Activated CD8-positive, alpha-beta T cell treated with anti-CD3 and anti-CD28 coated beads for 36 hours (primary cell): ENCODE measurements at regions of chr20 and their contacts with region 1.

Region 1: DNA sequence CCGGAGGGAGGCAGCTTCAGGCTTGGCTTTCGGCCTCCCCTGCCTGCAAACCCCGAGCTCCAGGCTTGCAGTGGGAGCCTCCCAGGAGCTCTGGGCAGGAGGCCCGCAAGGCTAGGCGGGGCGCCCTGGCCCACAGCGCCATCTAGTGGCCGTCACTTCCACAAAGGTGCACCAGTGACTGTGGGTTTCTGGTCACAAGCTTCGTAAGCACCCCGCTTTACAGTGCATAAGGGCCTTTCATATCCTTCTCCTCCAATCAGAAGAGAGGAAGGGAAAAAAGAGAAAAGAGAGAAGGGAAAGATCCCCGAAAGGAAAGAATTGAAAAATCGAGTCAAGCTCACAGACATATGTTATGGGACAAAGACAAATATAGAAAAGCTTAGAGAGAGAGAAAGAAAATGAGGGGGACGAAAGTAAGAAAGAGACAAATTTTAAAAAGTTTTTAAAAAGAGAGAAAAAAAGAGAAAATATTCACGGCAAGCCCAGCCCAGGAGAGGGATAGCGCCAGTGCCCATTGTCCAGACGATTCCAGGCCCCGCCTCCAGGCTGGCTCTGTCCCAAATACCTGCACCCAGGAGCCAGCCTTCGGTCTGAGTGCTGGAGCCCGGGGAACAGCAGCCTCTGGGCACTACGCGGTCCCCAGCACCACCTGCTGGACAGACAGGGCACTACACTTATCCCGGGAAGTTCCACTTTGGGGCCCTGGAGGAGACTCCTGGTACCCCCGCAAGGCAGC is 207.1 kb downstream of the PREX1 start:
- DNase-seq: peak; percentile 84
- ATAC-seq: peak; percentile 91
- H3K4me3 Mint-ChIP-seq: peak overlapping the region; percentile 22
- H3K27ac Mint-ChIP-seq: no peak overlapping the region
- H3K4me1 Mint-ChIP-seq: peaks cover 6% of the 10 kb centered on the region
- H3K27me3 Mint-ChIP-seq: no peaks in the 10 kb centered on the region
- CTCF ChIP-seq: peak; percentile 90

Region 2: DNA sequence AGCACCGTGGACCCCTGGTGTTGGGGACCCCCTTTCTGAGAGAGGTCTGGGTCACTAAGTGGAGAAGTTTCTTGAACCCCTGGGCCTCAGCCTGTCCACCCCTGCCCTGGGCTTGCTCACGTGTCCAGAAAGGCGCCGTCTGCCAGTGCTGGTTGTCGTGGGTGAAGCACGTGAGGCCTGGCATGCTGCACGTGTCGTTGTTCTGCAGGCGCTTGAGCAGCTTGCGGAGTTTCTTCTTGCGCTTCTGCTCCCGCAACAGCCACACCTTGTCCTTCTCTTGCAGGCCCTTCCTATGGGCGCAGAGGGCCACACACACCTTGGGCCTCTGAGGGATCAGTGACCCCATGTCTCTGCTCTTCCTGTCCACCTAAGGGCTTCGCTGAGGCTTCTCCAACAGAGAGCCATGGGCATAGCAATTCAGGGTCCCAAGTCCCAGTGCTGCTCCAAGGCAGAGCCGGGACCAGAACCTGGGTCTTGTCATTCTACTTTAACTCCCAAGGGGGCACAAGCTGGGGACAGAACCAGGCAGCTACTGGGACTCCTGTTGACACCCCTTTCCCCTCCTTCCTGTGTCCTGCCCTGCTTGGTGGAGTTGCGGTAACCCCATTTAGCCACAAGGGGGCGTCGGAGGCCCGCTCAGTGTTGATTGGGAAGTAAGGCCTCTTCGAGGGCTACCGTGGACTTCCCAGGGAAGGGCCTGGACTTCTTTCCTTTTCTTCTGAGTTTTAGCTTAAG is 957.2 kb before region 1 on chr20:
- CTCF ChIA-PET with region 1: interaction called, 10 read pairs
- POLR2A ChIA-PET with region 1: no interaction called
- intact Hi-C with region 1: no loop called
- DNase-seq: peak; percentile 82
- ATAC-seq: peak; percentile 89
- H3K4me3 Mint-ChIP-seq: no peak overlapping the region
- H3K27ac Mint-ChIP-seq: no peak overlapping the region
- H3K4me1 Mint-ChIP-seq: peaks cover 5% of the 10 kb centered on the region
- H3K27me3 Mint-ChIP-seq: no peaks in the 10 kb centered on the region
- CTCF ChIP-seq: peak; percentile 88

Region 3: GRCh38 chr20:47677635-47678453 is 942.8 kb before region 1 on chr20:
- CTCF ChIA-PET with region 1: interaction called, 31 read pairs
- POLR2A ChIA-PET with region 1: interaction called, 4 read pairs
- intact Hi-C with region 1: loop called (anchors 5 kb)
- DNase-seq: peak; percentile 79
- ATAC-seq: peak; percentile 86
- H3K4me3 Mint-ChIP-seq: no peak overlapping the region
- H3K27ac Mint-ChIP-seq: no peak overlapping the region
- H3K4me1 Mint-ChIP-seq: no peaks in the 10 kb centered on the region
- H3K27me3 Mint-ChIP-seq: no peaks in the 10 kb centered on the region
- CTCF ChIP-seq: peak; percentile 88

Region 4: GRCh38 chr20:47725248-47725973 is 895.3 kb before region 1 on chr20:
- CTCF ChIA-PET with region 1: interaction called, 23 read pairs
- POLR2A ChIA-PET with region 1: no interaction called
- intact Hi-C with region 1: no loop called
- DNase-seq: peak; percentile 91
- ATAC-seq: peak; percentile 67
- H3K4me3 Mint-ChIP-seq: no peak overlapping the region
- H3K27ac Mint-ChIP-seq: no peak overlapping the region
- H3K4me1 Mint-ChIP-seq: peaks cover 33% of the 10 kb centered on the region
- H3K27me3 Mint-ChIP-seq: no peaks in the 10 kb centered on the region
- CTCF ChIP-seq: peak; percentile 98

Region 5: GRCh38 chr20:48417111-48417858 is 203.4 kb before region 1 on chr20:
- CTCF ChIA-PET with region 1: interaction called, 11 read pairs
- POLR2A ChIA-PET with region 1: no interaction called
- intact Hi-C with region 1: no loop called
- DNase-seq: no peak
- ATAC-seq: no peak
- H3K4me3 Mint-ChIP-seq: no peak overlapping the region
- H3K27ac Mint-ChIP-seq: no peak overlapping the region
- H3K4me1 Mint-ChIP-seq: no peaks in the 10 kb centered on the region
- H3K27me3 Mint-ChIP-seq: peaks cover 6% of the 10 kb centered on the region
- CTCF ChIP-seq: no peak

Region 6: DNA sequence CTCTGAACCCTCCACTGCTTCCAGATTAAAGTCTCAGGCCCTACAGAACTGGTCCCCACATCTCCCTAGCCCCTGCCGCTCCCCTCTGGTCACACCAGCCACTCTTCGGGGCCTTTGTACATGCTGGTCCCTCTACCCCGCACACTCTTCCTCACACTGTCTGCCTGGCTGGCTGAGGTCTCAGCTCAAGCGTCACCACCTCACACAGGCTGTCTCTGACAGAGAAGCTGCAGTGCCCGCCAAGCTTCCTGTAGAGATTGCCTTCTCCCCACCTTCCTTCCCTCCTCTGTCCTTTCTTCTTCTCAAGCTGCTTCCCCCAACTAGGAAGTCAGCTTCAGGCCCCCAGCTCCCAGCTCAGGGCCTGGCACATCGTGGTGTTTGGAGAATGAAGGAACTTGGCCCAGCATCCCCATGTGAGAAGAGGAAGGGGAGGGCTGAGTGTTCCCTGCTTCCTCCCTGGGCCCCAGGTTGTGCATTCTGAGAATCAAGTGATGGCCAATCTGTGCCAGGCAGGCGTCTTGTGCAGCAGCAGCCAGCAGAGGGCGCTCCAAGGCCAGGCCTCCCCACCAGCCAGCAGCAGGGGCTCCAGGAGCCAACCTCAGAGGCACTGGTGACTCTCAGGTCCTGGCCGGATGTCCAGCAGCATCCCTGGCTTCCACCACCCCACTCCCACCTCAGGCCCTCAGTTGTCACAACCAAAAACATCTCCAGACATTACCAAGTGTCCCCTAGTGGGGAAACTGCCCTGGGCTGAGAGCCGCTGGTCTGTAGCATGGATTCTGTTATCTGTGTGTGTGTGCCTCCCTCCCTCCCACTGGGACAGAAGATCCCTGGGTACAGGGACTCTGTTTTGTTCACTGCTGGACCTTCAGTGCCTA is 15.0 kb after region 1 on chr20:
- CTCF ChIA-PET with region 1: interaction called, 12 read pairs
- POLR2A ChIA-PET with region 1: no interaction called
- intact Hi-C with region 1: no loop called
- DNase-seq: peak; percentile 70
- ATAC-seq: peak; percentile 83
- H3K4me3 Mint-ChIP-seq: no peak overlapping the region
- H3K27ac Mint-ChIP-seq: peak overlapping the region; percentile 70
- H3K4me1 Mint-ChIP-seq: no peaks in the 10 kb centered on the region
- H3K27me3 Mint-ChIP-seq: no peaks in the 10 kb centered on the region
- CTCF ChIP-seq: peak; percentile 74